H1 (cell line): ENCODE measurements at regions of chr12 and their contacts with region 1.

Region 1: GRCh38 chr12:53005986-53006809 is at the start of gene EIF4B:
- DNase-seq: peak; percentile 97 to 100
- H3K4me3 ChIP-seq: peak within 1 kb of the TSS; percentile 73 to 93 (median 88)
- H3K27ac ChIP-seq: peak within 1 kb of the TSS; percentile 98
- H3K4me1 ChIP-seq: peaks cover 0 to 12% (median 6%) of the 10 kb centered on the region in 4 experiments; a peak in 4 of 7 replicates
- H3K27me3 ChIP-seq: no peaks in the 10 kb centered on the region
- CTCF ChIP-seq: peak in 1 of 3 experiments; percentile 1; a peak in 1 of 4 replicates
- EP300 ChIP-seq: no peak
- POLR2A ChIP-seq: peak; percentile 58 to 95
- RAD21 ChIP-seq: no peak
- total RNA-seq, gene EIF4B: 811 and 816 TPM in 2 replicates

Region 2: DNA sequence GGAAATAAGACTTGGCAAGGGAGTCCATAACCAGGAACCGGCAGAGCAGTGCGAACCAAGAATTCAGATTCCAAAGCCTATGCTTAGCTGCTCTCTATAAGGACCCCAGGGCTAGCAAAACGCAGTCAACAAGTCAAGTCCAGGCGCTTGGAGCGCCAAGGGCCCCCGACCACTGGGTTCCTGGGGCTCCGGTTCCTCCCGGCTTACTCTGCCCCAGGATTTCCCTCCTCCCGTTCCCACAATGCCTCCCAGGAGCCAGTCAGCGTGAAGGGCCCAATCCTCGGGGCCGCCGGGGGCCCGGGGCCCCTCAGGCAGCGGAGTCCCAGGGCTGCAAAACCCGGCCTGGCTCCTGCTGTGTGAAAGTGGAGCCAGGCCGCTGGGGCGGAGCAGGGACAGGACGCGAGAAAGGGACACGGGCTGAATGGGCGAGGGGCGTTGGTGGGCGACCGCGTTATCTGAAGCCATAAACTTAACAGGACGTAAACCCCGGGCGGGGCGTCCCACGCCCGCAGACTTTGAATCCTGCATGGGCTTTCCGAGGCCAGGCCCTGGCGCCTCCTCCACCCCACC is 102.8 kb before region 1 on chr12:
- CTCF ChIA-PET with region 1: interaction called, 5 read pairs
- POLR2A ChIA-PET with region 1: interaction called, 29 read pairs
- DNase-seq: peak; percentile 61 to 91
- H3K4me3 ChIP-seq: peak overlapping the region; percentile 59 to 100 (median 76)
- H3K27ac ChIP-seq: no peak overlapping the region
- H3K4me1 ChIP-seq: peaks cover 14 to 21% (median 15%) of the 10 kb centered on the region in 4 experiments
- H3K27me3 ChIP-seq: no peaks in the 10 kb centered on the region; a peak in 1 of 7 replicates
- CTCF ChIP-seq: no peak
- EP300 ChIP-seq: peak in 1 of 2 experiments; percentile 53; a peak in 1 of 3 replicates
- POLR2A ChIP-seq: no peak; a peak in 1 of 3 replicates
- RAD21 ChIP-seq: peak in 1 of 2 experiments; percentile 5; a peak in 1 of 4 replicates

Region 3: DNA sequence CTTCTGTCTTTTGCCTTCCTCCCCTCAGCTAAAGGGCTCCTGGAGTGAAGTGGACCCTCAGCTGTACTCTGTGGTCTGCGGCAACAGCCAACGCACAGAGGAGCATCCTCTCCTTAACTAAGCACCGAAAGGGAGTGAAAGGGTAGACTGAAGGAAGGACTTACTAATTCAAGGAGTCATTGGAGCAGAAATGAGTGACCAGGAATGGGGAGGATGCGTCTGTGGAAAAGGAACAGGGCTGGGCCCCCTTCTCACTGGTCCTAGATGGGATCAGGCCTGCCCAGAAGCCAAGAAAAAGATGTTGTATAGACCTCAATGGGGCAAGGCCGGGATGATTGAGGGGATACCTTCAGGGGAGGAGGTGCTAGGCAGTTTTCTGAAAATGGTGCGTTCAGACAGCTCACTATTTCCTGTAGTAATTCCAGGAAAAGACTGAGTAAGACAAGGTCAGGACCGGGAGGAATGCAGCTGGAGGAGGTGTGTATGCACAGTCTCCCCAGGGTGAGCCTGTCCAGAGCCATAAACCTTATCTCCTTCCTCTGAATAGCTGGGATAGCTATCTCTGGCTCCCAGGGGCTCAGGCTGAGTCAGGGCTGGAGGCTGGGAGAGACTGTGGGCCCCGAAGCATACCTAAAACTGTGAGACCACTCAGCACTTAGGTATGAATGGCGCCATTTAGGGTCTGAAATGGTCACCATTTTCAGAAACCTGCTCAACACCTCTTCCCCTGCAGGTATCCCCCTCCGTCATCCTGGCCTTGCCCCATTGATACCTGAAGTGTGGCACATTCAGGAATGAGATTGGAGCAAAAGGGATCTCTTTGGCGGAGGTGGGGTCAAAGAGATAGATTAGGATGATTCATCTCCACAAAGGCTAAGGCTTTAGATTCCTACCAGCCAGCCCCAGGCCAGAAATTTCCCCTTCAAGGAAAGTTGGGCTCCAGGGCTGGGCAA is 81.2 kb before region 1 on chr12:
- CTCF ChIA-PET with region 1: no interaction called
- POLR2A ChIA-PET with region 1: interaction called, 10 read pairs
- DNase-seq: no peak
- H3K4me3 ChIP-seq: no peak overlapping the region
- H3K27ac ChIP-seq: no peak overlapping the region
- H3K4me1 ChIP-seq: peaks cover 0 to 24% (median 9%) of the 10 kb centered on the region in 4 experiments; a peak in 6 of 7 replicates
- H3K27me3 ChIP-seq: no peaks in the 10 kb centered on the region
- CTCF ChIP-seq: no peak
- EP300 ChIP-seq: no peak
- POLR2A ChIP-seq: no peak
- RAD21 ChIP-seq: no peak

Region 4: DNA sequence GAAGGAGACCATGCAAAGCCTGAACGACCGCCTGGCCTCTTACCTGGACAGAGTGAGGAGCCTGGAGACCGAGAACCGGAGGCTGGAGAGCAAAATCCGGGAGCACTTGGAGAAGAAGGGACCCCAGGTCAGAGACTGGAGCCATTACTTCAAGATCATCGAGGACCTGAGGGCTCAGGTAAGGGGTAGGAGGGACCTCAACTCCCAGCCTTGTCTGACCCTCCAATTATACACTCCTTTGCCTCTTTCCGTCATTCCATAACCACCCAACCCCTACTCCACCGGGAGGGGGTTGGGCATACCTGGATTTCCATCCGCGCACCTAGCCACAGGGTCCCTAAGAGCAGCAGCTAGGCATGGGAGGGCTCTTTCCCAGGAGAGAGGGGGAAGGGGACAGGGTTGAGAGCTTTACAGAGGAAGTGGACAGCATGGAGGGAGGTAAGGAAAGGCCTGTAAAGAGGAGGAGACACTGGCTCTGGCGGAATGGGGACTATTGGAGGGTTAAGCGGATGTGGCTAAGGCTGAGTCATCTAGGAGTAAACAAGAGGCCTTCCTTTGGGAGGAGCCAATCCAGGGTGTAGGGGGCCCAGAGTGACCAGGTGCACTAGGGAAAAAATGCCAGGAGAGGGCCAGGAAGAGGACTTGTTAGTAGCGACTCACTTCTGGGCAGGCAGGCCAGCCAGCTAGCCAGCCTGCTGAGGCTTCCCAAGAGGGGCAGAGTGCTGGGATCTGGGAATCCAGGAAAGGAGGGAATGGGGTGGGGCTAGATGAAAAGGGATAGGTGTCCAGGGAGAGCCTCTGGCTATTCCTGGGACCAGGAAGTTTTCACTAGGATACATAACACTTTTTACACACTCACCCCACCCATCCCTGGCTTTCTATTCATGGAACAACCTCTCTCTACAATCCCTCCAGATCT is 56.5 kb before region 1 on chr12:
- CTCF ChIA-PET with region 1: no interaction called
- POLR2A ChIA-PET with region 1: interaction called, 17 read pairs
- DNase-seq: peak in 1 of 2 experiments; percentile 62
- H3K4me3 ChIP-seq: peak overlapping the region; percentile 88 to 98 (median 93)
- H3K27ac ChIP-seq: peak overlapping the region; percentile 83
- H3K4me1 ChIP-seq: peaks cover 18 to 38% (median 29%) of the 10 kb centered on the region in 4 experiments
- H3K27me3 ChIP-seq: no peaks in the 10 kb centered on the region
- CTCF ChIP-seq: no peak
- EP300 ChIP-seq: no peak
- POLR2A ChIP-seq: peak; percentile 73 to 85
- RAD21 ChIP-seq: peak in 1 of 2 experiments; percentile 3; a peak in 1 of 4 replicates

Region 5: DNA sequence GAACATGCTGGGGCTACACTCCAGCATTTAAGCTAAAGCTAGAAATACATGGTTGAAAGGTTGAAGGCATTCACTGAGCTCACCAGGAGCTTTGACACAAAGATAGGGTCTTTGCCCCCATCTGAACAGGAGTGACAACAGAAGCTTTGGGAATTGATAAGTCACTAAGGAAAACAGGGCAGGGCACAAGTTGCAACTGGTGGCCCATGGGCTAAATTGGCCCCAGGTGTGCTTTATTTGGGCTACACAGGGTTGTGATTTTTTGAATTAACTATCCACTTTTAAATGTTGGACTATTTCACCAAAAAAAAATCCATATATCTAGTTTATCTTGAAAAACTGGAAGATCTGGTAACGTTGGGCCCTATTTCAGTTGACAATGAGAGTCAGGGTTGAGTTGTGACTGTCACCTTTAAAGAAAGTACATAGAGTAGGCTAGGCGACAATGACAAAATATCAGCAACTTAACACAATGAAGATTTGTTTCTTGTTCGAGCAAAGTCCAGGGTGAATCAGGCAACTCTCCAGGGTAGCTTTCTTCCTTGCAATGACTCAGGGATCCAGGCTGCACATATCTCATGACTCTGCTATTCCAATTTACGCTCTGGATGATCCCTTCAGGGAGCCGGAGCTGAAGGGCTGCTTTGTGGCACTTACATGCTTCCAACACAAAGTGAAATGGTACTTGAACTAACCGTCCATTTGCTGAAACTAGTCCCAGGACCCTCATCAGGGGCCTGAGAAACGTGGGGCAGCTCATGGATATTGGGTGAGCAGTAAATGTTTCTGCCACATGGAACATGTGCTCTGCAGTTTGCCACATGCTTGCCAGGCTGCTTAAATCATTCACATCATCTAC is 13.3 kb before region 1 on chr12:
- CTCF ChIA-PET with region 1: interaction called, 4 read pairs
- POLR2A ChIA-PET with region 1: interaction called, 63 read pairs
- DNase-seq: no peak
- H3K4me3 ChIP-seq: no peak overlapping the region
- H3K27ac ChIP-seq: no peak overlapping the region
- H3K4me1 ChIP-seq: peaks cover 0 to 4% (median 0%) of the 10 kb centered on the region in 4 experiments; a peak in 1 of 7 replicates
- H3K27me3 ChIP-seq: no peaks in the 10 kb centered on the region
- CTCF ChIP-seq: no peak
- EP300 ChIP-seq: no peak
- POLR2A ChIP-seq: no peak
- RAD21 ChIP-seq: no peak

Region 6: GRCh38 chr12:53054112-53054833 is 48.1 kb after region 1 on chr12:
- CTCF ChIA-PET with region 1: interaction called, 3 read pairs
- POLR2A ChIA-PET with region 1: interaction called, 711 read pairs
- DNase-seq: peak; percentile 87 to 97
- H3K4me3 ChIP-seq: peak overlapping the region; percentile 82 to 86 (median 84)
- H3K27ac ChIP-seq: peak overlapping the region; percentile 75; the same call in 1 of the 2 replicates
- H3K4me1 ChIP-seq: peaks cover 4 to 30% (median 23%) of the 10 kb centered on the region in 4 experiments
- H3K27me3 ChIP-seq: peaks cover 0 to 12% (median 3%) of the 10 kb centered on the region in 4 experiments; a peak in 4 of 7 replicates
- CTCF ChIP-seq: no peak
- EP300 ChIP-seq: no peak
- POLR2A ChIP-seq: peak in 1 of 2 experiments; percentile 86; a peak in 2 of 3 replicates
- RAD21 ChIP-seq: no peak

Region 7: DNA sequence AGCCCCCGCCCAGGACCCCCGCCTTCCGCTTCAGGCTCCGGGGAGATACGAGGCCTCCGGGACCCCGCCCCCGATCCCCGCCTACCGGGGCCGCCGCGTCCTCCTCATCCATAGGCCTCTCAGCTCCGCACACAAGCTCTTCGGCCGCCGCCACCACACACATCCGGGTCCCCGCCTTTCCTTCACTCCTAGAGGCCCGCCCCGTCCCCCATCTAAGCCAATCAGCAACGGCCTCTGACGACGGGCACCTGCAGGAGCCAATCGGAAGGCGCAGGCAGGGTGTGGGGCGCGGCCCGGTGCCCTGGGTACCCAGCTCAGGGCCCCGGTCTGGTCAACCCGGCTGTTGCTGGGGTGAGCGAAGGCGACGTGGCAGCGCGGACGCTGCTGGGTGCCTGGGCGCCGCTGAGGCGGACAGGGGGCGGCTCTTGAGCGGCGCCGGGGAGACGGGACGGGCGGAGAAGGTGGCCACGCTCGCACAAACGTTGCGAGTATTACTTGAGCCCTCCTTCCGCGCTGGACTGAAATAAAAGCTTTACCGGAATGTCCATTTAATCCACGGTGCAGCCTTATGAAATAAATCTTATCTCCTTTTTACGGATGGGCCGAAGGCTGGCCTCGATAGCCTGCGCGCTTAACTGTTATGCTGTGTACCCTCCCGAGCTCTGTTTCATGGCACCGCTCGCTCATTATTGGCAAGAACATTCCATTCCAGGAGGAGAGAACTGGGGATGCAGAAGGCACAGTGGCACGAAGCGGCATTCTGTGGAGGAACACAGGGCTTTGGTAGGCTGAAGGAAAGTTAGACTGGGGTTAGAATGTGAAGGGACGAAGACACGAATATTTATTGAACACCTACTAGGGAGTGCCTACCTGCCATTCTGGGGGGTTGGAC is 73.3 kb after region 1 on chr12 and contains the start of gene SPRYD3:
- CTCF ChIA-PET with region 1: no interaction called
- POLR2A ChIA-PET with region 1: interaction called, 11 read pairs
- DNase-seq: peak; percentile 94 to 100
- H3K4me3 ChIP-seq: peak within 1 kb of the TSS; percentile 49 to 77 (median 68)
- H3K27ac ChIP-seq: peak within 1 kb of the TSS; percentile 62; the same call in 1 of the 2 replicates
- H3K4me1 ChIP-seq: peaks cover 0 to 3% (median 2%) of the 10 kb centered on the region in 4 experiments; a peak in 3 of 7 replicates
- H3K27me3 ChIP-seq: peaks cover 0 to 6% (median 4%) of the 10 kb centered on the region in 4 experiments; a peak in 4 of 7 replicates
- CTCF ChIP-seq: no peak
- EP300 ChIP-seq: no peak
- POLR2A ChIP-seq: no peak; a peak in 2 of 3 replicates
- RAD21 ChIP-seq: no peak
- total RNA-seq, gene SPRYD3: 6.6 and 6.8 TPM in 2 replicates